ENCODE measurements at regions of chr10 and their contacts with region 1.

Region 1: DNA sequence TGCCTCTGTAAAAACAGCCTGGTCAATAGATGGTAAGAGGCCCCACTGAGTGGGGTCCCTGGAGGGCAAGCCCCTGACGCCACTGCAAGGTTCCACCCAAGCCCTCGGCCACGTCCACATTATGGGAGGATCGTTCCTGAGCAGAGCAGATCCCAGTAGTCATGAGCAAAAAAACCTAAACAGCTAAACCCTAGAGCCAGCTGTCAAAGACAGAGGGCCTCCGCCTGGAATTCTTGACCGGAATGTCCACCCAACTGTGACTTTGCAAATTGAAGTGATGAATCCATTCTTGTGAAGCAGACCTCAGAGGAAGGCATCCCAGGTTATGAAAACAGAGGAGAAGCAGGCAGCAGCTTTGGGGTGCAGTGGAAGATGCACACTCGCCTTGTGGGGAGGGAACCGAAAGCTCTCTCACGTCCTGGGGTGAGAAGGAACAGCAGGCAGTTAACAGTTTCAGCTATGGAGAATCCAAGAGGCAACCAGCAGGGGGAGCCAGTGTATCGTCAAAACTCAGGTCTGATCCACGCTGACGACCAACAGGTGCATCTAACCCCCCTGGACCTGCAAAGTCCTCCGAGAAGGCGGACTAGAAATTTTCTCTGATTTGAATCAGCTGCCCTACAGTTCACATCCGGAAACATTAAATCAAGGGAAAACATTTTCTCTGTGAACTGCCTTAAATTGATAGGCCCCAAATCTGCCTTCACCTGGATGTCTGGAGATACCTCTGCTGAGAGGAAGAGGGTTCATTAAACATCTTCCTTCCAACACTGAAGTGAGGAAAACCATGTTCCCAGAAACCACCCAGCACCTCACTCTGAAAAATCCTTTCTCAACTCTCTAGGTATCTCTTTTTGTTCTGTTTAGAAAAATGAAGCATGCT is 139.1 kb upstream of the PFKP start:
- ATAC-seq: peak; percentile 57 to 89 (median 76)
- H3K4me3 ChIP-seq: no peak overlapping the region
- H3K27ac ChIP-seq: no peak overlapping the region
- H3K4me1 ChIP-seq: peaks cover 14 to 23% of the 10 kb centered on the region in 2 donors

Region 2: DNA sequence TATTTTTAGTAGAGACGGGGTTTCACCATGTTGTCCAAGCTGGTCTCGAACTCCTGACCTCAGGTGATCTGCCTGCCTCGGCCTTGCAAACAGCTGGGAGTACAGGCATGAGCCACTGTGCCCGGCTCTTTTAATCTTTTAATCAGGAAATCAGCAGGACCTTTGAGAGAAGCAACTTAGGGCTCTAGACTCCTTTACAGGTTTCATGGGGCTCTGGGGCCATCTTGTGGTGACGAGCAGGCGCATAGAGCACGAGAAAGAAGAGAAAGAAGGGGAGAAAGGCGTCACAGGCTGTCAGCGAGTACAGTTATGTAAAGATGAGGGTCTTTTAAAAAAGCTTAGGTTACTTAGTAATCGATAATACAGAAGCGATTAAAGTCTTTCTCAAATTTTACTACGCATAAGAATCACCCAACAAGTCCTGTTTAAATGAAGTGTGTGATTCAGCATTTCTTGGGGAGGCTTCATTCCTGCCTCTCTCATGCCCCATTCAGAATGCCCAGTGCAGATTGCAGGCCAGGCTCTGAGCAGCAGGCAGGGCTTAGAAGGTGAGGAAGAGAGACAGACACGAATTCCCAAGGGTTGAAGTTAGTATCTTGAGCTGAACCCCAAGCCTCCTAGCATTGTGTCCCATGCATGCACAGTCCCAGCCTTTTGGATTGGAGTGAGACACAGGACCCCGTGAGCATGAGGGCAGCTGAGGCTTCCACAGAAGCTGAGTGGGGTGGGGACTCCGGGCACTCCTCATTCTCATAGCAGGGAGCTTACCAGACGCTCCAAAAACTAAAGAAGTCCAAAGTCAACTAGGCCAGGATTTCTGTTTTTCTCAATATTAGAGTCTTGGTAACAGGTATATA is 115.5 kb after region 1 on chr10:
- in situ Hi-C with region 1: loop called in 2 of 9 experiments (anchors 25 kb)
- ATAC-seq: peak; percentile 24 to 83 (median 70)
- H3K4me3 ChIP-seq: no peak overlapping the region
- H3K27ac ChIP-seq: no peak overlapping the region
- H3K4me1 ChIP-seq: peaks cover 30 to 44% of the 10 kb centered on the region in 2 donors

Region 3: DNA sequence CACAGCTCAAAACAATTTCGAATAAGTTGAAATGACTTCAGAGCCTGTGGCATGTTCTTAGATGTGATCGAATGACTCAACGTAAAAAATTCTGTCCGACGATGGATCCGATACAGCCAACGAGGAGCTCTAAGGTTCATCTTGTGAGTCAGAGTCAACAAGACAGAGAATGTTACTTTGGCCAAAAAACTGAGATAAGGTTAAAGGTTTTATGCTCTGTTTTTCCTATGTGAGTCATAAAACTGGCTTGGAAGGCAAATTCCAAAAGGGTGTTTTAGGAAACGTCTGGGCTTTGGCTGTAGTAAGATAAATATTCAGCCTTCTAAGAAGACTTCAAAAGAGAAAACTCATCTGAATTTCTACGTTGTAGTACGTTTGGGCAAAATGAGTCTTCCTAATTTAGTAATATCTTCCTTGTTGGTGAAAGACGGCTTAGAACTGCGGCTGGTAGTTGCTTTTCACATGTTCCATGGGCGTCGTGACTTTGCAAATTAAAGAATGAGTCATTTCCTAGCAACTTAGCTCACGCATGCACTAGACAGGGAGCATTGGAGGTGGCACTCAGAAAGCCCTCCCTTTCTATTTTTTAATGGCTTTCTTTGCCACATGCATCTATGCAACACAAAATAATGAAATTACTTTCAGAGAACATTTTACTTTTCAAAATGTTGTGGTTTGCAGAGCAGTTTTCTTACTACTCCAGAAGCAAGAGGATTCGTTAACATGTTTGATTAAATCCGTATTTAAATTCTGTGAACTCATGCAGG is 167.4 kb after region 1 on chr10:
- in situ Hi-C with region 1: no loop called
- ATAC-seq: peak; percentile 73 to 93 (median 84)
- H3K4me3 ChIP-seq: no peak overlapping the region
- H3K27ac ChIP-seq: no peak overlapping the region
- H3K4me1 ChIP-seq: peaks cover 10% of the 10 kb centered on the region in 2 donors

Region 4: GRCh38 chr10:3151889-3152565 is 223.8 kb after region 1 on chr10:
- in situ Hi-C with region 1: no loop called
- ATAC-seq: peak in 1 of 8 experiments; percentile 13
- H3K4me3 ChIP-seq: no peak overlapping the region
- H3K27ac ChIP-seq: no peak overlapping the region
- H3K4me1 ChIP-seq: no peaks in the 10 kb centered on the region

Measured in motor neuron (in vitro differentiated cells).